ENCODE measurements at regions of chr11 and their contacts with region 1.

Region 1: GRCh38 chr11:17730608-17731462 is 3.7 kb upstream of the KCNC1 start:
- DNase-seq: peak; percentile 59
- H3K4me3 ChIP-seq: no peak overlapping the region
- H3K27ac ChIP-seq: no peak overlapping the region
- H3K4me1 ChIP-seq: no peaks in the 10 kb centered on the region
- CTCF ChIP-seq: peak; percentile 81

Region 2: GRCh38 chr11:17598700-17599459 is 132.0 kb before region 1 on chr11:
- CTCF ChIA-PET with region 1: interaction called, 7 read pairs
- POLR2A ChIA-PET with region 1: no interaction called
- intact Hi-C with region 1: loop called (anchors 1 kb)
- DNase-seq: peak; percentile 75
- H3K4me3 ChIP-seq: no peak overlapping the region
- H3K27ac ChIP-seq: no peak overlapping the region
- H3K4me1 ChIP-seq: no peaks in the 10 kb centered on the region
- CTCF ChIP-seq: peak; percentile 91